Naive thymus-derived CD8-positive, alpha-beta T cell (primary cell): ENCODE measurements at regions of chr5 and their contacts with region 1.

Region 1: DNA sequence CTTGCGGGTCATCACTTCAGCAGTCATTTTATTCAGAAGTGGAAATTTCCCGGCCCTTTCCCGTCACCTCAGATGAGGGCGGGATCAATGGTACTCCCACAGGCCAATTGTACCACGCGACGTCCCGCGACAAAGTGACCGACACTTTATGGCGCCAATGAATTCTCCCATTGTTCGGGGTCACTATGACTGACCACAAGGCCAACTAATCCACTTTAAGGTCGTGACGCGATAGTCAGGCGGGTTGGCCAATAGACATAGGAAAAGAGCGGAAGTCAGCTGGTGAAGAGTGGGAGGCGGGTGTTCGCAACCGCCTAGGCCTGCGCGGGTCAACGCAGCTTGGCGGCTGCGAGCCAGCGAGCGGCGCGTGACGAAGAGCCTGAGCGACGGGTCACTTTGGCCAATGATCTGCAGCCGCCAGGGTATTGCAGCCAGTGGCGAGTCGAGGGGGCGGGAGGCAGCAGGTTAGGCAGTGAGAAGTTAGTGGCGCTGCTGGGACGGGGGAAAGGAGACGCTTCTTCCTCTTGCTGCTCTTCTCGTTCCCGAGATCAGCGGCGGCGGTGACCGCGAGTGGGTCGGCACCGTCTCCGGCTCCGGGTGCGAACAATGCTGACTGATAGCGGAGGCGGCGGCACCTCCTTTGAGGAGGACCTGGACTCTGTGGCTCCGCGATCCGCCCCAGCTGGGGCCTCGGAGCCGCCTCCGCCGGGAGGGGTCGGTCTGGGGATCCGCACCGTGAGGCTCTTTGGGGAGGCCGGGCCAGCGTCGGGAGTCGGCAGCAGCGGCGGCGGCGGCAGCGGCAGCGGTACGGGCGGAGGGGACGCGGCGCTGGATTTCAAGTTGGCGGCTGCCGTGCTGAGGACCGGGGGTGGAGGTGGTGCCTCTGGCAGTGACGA is at the start of gene ANKHD1:
- DNase-seq: peak; percentile 90 to 99 (median 98)
- ATAC-seq: peak; percentile 79 to 84
- H3K4me3 Mint-ChIP-seq: no peak within 1 kb of the TSS
- H3K27ac Mint-ChIP-seq: peak within 1 kb of the TSS in 2 of 10 donors; percentile 89 to 94
- H3K4me1 Mint-ChIP-seq: peaks cover 20 to 46% (median 38%) of the 10 kb centered on the region in 4 donors
- H3K27me3 Mint-ChIP-seq: no peaks in the 10 kb centered on the region
- polyA plus RNA-seq, gene ANKHD1: 54.9 to 82.8 (median 63.8) TPM

Region 2: DNA sequence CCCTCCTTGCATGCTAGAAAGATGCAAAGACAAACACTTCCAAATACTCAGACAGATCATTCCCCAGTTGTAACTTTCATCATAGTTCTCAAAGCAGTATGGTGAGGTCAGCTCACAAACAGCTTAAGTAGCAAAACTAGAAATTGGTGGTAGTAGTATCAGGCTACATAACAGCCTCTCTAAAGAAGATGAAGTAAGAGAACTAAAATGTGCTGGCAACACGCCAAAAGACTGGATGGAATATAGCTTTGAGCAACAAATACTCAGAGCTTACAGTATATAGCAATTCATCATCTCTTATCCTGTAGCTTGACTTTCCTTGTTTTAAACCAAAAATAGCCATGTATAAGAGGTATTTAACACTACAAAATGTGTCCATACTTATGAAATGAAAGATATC is 106.2 kb before region 1 on chr5:
- POLR2A ChIA-PET with region 1: no interaction called
- DNase-seq: peak in 1 of 10 donors; percentile 3
- ATAC-seq: no peak
- H3K4me3 Mint-ChIP-seq: no peak overlapping the region
- H3K27ac Mint-ChIP-seq: peak overlapping the region in 2 of 10 donors; percentile 26 to 33
- H3K4me1 Mint-ChIP-seq: peaks cover 18 to 67% (median 56%) of the 10 kb centered on the region in 4 donors
- H3K27me3 Mint-ChIP-seq: no peaks in the 10 kb centered on the region

Region 3: DNA sequence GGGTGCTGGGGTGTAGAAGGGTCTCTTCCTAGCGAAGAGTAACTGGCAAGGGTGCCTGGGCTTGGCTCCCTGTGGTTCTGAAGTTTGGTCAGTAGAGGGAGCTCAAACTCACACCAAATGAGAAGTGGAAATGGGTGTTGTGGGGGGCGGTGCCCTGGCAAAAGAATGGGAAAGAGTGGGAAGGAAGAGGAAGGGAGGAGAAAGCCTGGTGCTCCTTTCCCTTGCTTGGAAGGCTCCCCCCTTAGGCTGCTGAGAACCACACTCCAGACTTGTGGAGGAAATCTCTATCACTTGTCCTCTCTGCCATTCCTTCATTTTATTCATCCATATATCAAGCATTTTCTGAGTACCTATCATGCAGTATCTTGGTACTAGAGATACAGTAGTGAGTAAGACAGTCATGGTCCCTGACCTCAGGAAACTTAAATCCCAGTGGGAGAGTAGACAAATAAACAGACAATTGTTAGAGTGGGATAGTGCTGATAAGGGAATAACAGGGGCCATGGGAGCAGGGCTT is 28.6 kb before region 1 on chr5:
- POLR2A ChIA-PET with region 1: no interaction called
- DNase-seq: peak in 8 of 10 donors; percentile 10 to 72 (median 36)
- ATAC-seq: peak; percentile 52 to 55
- H3K4me3 Mint-ChIP-seq: no peak overlapping the region
- H3K27ac Mint-ChIP-seq: peak overlapping the region in 1 of 10 donors; percentile 48
- H3K4me1 Mint-ChIP-seq: peaks cover 2 to 8% (median 3%) of the 10 kb centered on the region in 4 donors
- H3K27me3 Mint-ChIP-seq: no peaks in the 10 kb centered on the region

Region 4: DNA sequence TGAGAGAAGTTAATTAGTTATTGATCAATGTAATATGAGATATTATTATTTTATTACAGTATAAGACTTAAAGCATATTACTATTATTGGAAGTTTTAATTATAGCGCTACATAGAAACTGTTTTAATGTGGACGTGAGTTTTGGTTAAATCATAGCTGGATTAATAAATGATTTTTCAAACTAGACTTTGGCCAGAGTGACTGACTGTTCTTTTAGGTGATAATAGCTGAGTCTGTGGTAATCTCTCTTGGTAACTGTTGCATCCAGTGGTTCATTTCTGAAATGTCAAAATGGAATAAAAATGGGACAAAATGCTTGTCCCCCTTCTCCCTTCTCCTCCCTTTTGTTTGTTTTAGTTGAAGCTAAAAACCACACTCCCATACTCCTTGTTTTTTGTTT is 28.1 kb after region 1 on chr5:
- POLR2A ChIA-PET with region 1: no interaction called
- DNase-seq: no peak
- ATAC-seq: no peak
- H3K4me3 Mint-ChIP-seq: no peak overlapping the region
- H3K27ac Mint-ChIP-seq: peak overlapping the region in 1 of 10 donors; percentile 66
- H3K4me1 Mint-ChIP-seq: peaks cover 13 to 48% (median 40%) of the 10 kb centered on the region in 4 donors
- H3K27me3 Mint-ChIP-seq: no peaks in the 10 kb centered on the region

Region 5: GRCh38 chr5:140564196-140565023 is 162.8 kb after region 1 on chr5 and contains the starts of genes APBB3 and SLC35A4:
- POLR2A ChIA-PET with region 1: interaction called, 18 read pairs
- DNase-seq: peak; percentile 85 to 99 (median 98)
- ATAC-seq: peak; percentile 88
- H3K4me3 Mint-ChIP-seq: peak within 1 kb of the TSS; percentile 91 to 99 (median 96)
- H3K27ac Mint-ChIP-seq: peak within 1 kb of the TSS; percentile 96 to 99 (median 98)
- H3K4me1 Mint-ChIP-seq: peaks cover 39 to 71% (median 66%) of the 10 kb centered on the region in 4 donors
- H3K27me3 Mint-ChIP-seq: no peaks in the 10 kb centered on the region
- polyA plus RNA-seq, gene APBB3: 2.5 to 4.6 (median 3.7) TPM
- polyA plus RNA-seq, gene SLC35A4: 92.8 to 142 (median 113) TPM

Region 6: DNA sequence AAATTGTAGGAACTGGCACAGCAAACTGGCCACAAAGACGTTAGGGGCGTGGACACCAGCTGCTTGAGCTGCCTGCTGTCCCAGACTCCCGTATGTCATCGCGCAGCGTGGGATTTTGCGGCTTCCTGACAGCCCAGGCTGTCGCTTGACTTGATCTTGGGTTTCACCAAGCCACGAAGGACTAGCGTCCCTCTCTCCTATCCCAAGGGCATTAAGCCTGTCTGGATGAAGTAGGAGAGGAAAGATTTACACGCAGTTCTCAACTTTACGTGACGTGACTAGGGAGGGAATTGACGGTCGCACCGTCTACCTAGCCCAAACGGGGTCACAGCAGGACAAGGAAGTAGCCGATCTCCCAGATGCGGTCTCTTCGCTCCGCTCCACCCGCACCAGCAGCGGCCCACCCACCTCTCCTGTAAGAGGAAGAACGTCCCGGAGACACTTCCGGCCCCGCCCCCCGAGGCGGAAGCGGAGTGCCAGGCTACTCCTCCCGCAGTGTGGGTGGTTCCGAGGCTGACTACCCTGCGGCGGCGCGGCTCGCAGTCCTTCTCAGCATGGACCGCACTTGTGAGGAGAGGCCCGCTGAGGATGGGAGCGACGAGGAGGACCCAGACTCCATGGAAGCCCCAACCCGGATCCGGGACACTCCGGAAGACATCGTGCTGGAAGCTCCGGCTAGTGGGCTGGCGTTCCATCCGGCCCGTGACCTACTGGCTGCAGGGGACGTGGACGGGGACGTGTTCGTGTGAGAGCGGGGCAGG is 262.9 kb after region 1 on chr5 and contains the start of gene WDR55:
- POLR2A ChIA-PET with region 1: interaction called, 15 read pairs
- DNase-seq: peak; percentile 91 to 98 (median 94)
- ATAC-seq: peak; percentile 91 to 93
- H3K4me3 Mint-ChIP-seq: peak within 1 kb of the TSS; percentile 91 to 99 (median 97)
- H3K27ac Mint-ChIP-seq: peak within 1 kb of the TSS; percentile 97 to 99 (median 98)
- H3K4me1 Mint-ChIP-seq: peaks cover 24 to 47% (median 38%) of the 10 kb centered on the region in 4 donors
- H3K27me3 Mint-ChIP-seq: no peaks in the 10 kb centered on the region
- polyA plus RNA-seq, gene WDR55: 9.2 to 15.6 (median 9.6) TPM

Region 7: GRCh38 chr5:140700177-140701144 is 298.9 kb after region 1 on chr5 and contains the start of gene ZMAT2:
- POLR2A ChIA-PET with region 1: interaction called, 14 read pairs
- DNase-seq: peak; percentile 79 to 97 (median 92)
- ATAC-seq: peak; percentile 97 to 98
- H3K4me3 Mint-ChIP-seq: peak within 1 kb of the TSS; percentile 91 to 100 (median 98)
- H3K27ac Mint-ChIP-seq: peak within 1 kb of the TSS; percentile 93 to 99 (median 98)
- H3K4me1 Mint-ChIP-seq: peaks cover 23 to 33% (median 31%) of the 10 kb centered on the region in 4 donors
- H3K27me3 Mint-ChIP-seq: no peaks in the 10 kb centered on the region
- polyA plus RNA-seq, gene ZMAT2: 64.2 to 81.3 (median 77.0) TPM